ENCODE measurements at regions of chr6 and their contacts with region 1.

Region 1: DNA sequence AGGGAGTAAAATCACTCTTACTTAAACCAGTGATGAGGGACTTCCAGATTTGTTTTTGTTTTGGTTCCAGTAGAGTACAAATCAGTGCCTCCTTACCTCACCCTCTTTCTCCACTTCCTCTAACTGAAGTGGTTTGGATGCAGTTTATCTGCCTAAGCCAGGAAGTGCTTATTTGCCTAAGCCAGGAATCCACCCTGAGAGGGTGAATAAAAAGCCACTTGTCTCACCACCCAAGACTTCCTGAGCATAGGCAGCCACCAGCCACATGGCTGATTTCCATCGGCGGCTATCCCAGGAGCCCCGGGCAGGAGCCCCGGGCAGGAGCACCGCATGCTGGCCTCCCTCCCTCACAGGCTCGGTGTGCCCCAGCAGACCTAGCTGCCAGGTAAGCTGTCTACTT is 12.0 kb downstream of the LRP11 start:
- DNase-seq: no peak
- ATAC-seq: peak in 2 of 4 experiments; percentile 19 to 80
- H3K4me3 ChIP-seq: no peak overlapping the region
- H3K4me3 Mint-ChIP-seq: no peak overlapping the region
- H3K27ac ChIP-seq: no peak overlapping the region
- H3K27ac Mint-ChIP-seq: no peak overlapping the region
- H3K4me1 ChIP-seq: peaks cover 2 to 3% of the 10 kb centered on the region in 2 experiments
- H3K4me1 Mint-ChIP-seq: peaks cover 10 to 16% (median 14%) of the 10 kb centered on the region in 3 donors
- H3K27me3 ChIP-seq: peaks cover 0 to 11% of the 10 kb centered on the region in 2 experiments
- H3K27me3 Mint-ChIP-seq: peaks cover 0 to 17% of the 10 kb centered on the region in 2 donors

Region 2: DNA sequence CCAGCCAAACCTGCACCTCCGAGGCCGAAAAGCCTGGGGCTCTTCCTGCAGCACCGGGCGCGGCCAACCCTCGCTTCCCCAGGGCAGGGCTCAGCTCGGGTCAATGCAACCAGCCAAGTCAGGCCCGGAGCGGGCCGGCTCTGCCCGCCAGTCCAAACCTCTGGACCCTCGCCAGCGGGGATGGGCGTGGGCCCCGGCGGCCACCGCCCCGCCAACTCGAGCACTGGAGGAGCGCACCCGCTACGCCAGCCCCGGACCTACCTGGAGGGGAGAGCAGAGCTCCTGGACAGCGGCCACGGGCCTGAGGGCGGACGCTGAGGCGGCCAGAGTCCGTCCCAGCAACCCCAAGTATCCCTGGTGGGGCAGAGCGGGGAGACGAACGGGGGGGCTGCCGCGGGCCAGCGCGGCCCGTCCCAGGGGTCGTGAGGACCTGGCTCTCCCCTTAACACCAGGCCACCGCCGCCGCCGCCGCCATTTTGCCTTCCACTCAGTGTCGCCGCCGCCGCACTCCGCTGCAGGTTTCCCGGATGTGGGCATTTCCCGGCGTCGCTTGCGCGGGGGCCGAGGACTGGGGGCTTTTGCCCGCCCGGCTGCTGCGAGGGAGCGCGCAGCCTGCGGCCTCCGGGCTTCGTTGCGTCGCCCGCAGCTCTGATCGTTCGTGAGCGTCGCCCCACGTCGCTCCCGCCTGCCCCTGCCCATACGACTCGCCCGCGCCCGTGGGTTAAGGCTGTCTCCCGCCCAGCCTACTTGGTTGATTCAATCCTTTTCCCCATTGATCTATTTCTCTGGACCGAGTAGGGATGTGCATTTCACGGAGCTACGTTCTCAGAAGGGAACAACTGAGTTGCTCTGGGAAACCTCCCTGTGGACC is 134.4 kb before region 1 on chr6 and contains the start of gene LATS1:
- CTCF ChIA-PET with region 1: no interaction called
- POLR2A ChIA-PET with region 1: no interaction called
- DNase-seq: peak; percentile 79 to 96 (median 90)
- ATAC-seq: peak; percentile 93 to 96 (median 94)
- H3K4me3 ChIP-seq: peak within 1 kb of the TSS; percentile 77 to 88
- H3K4me3 Mint-ChIP-seq: peak within 1 kb of the TSS; percentile 94 to 97 (median 96)
- H3K27ac ChIP-seq: peak within 1 kb of the TSS; percentile 84
- H3K27ac Mint-ChIP-seq: peak within 1 kb of the TSS; percentile 97 to 98
- H3K4me1 ChIP-seq: peaks cover 16 to 19% of the 10 kb centered on the region in 2 experiments
- H3K4me1 Mint-ChIP-seq: peaks cover 40 to 52% (median 41%) of the 10 kb centered on the region in 3 donors
- H3K27me3 ChIP-seq: no peaks in the 10 kb centered on the region
- H3K27me3 Mint-ChIP-seq: no peaks in the 10 kb centered on the region
- total RNA-seq, gene LATS1: 38.0 to 43.3 (median 39.2) TPM

Region 3: GRCh38 chr6:149820527-149820926 is 31.7 kb before region 1 on chr6:
- CTCF ChIA-PET with region 1: no interaction called
- POLR2A ChIA-PET with region 1: no interaction called
- DNase-seq: no peak
- ATAC-seq: no peak
- H3K4me3 ChIP-seq: no peak overlapping the region
- H3K4me3 Mint-ChIP-seq: no peak overlapping the region
- H3K27ac ChIP-seq: no peak overlapping the region
- H3K27ac Mint-ChIP-seq: no peak overlapping the region
- H3K4me1 ChIP-seq: no peaks in the 10 kb centered on the region
- H3K4me1 Mint-ChIP-seq: no peaks in the 10 kb centered on the region
- H3K27me3 ChIP-seq: no peaks in the 10 kb centered on the region
- H3K27me3 Mint-ChIP-seq: peaks cover 0 to 5% of the 10 kb centered on the region in 2 donors

Region 4: DNA sequence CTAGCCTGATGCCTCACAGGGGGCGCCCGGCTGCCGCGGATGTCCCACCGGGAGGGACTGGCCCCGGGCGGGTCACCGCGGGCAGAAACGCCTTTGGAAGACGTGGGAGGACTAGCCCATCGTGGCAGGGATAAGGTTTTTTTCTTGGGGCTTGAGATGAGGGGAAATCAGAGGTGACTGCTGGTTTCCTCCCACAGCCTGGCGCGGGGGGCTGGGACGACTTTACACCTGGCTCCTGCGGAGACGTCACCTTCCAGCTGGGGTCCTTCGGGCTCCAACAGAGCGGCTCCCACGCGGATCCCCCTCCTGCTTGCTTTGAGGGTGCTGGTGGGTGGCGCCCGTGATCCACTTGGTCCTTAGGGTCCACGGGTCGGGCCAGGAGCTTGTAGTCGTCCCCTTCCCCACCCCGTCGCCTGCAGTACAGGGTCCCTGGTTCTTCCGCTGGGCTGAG is 205.3 kb after region 1 on chr6:
- CTCF ChIA-PET with region 1: no interaction called
- POLR2A ChIA-PET with region 1: interaction called in 1 of 2 experiments, 17 read pairs
- DNase-seq: no peak
- ATAC-seq: no peak
- H3K4me3 ChIP-seq: no peak overlapping the region
- H3K4me3 Mint-ChIP-seq: no peak overlapping the region
- H3K27ac ChIP-seq: no peak overlapping the region
- H3K27ac Mint-ChIP-seq: no peak overlapping the region
- H3K4me1 ChIP-seq: peaks cover 2 to 7% of the 10 kb centered on the region in 2 experiments
- H3K4me1 Mint-ChIP-seq: peaks cover 8 to 9% (median 8%) of the 10 kb centered on the region in 3 donors
- H3K27me3 ChIP-seq: peaks cover 0 to 53% of the 10 kb centered on the region in 2 experiments
- H3K27me3 Mint-ChIP-seq: peaks cover 51 to 63% of the 10 kb centered on the region in 2 donors